Activated naive CD8-positive, alpha-beta T cell treated with anti-CD3 and anti-CD28 coated beads, Interleukin-2, amount 10 ng/mL, durations not matched to agents 7 days and 5 days (primary cell): ENCODE measurements at regions of chr17 and their contacts with region 1.

Region 1: GRCh38 chr17:28335201-28335955 is at the starts of genes IFT20 and TNFAIP1:
- DNase-seq: peak; percentile 92
- ATAC-seq: peak; percentile 97
- H3K4me3 Mint-ChIP-seq: peak within 1 kb of the TSS; percentile 97
- H3K27ac Mint-ChIP-seq: peak within 1 kb of the TSS; percentile 97
- H3K4me1 Mint-ChIP-seq: peaks cover 27% of the 10 kb centered on the region
- H3K27me3 Mint-ChIP-seq: no peaks in the 10 kb centered on the region
- total RNA-seq, gene IFT20: 24.6 to 28.9 TPM
- total RNA-seq, gene TNFAIP1: 18.7 to 20.3 TPM

Region 2: DNA sequence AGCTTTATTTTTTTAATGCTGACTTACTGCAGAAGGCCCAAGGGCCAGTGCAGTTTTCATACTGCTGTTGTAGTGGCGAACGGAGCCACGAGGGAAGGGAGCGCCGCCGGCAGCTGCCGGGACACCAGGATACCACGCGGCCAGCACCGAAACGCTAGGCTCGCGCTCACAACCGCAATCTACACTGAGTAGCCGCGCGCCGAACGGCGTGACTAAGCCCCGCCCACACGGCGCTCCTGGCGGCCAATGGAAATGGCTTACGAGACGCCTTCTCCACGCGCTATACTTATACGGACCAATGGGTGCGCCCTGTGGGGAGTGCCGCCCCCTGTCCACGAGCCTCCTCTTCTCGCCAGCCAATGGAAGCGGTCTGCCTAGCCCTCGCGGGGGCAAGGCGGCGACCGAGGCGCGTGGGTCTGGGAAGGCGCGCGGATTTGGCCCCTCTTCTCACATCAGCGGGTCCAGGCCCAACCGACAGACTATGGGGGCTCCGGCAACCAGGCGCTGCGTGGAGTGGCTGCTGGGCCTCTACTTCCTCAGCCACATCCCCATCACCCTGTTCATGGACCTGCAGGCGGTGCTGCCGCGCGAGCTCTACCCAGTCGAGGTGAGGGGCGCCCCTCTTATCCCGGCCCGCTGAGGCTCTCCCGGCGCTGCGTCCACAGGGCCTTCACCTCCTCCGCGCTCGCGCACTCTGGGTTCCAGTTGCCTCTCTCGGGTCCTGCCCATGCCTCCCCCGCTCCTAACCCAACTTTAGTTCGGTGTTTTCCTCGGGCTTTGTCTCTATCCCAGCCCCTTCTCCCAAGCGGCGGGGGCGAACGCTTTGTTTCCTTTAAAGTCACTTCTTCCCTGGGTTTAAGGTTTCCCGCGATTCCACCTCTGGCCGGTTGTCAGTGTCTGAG is 16.4 kb before region 1 on chr17 and contains the start of gene TMEM97:
- POLR2A ChIA-PET with region 1: interaction called, 24 read pairs
- DNase-seq: peak; percentile 95
- ATAC-seq: peak; percentile 99
- H3K4me3 Mint-ChIP-seq: peak within 1 kb of the TSS; percentile 84
- H3K27ac Mint-ChIP-seq: peak within 1 kb of the TSS; percentile 86
- H3K4me1 Mint-ChIP-seq: peaks cover 32% of the 10 kb centered on the region
- H3K27me3 Mint-ChIP-seq: no peaks in the 10 kb centered on the region
- total RNA-seq, gene TMEM97: 18.8 to 20.9 TPM

Region 3: DNA sequence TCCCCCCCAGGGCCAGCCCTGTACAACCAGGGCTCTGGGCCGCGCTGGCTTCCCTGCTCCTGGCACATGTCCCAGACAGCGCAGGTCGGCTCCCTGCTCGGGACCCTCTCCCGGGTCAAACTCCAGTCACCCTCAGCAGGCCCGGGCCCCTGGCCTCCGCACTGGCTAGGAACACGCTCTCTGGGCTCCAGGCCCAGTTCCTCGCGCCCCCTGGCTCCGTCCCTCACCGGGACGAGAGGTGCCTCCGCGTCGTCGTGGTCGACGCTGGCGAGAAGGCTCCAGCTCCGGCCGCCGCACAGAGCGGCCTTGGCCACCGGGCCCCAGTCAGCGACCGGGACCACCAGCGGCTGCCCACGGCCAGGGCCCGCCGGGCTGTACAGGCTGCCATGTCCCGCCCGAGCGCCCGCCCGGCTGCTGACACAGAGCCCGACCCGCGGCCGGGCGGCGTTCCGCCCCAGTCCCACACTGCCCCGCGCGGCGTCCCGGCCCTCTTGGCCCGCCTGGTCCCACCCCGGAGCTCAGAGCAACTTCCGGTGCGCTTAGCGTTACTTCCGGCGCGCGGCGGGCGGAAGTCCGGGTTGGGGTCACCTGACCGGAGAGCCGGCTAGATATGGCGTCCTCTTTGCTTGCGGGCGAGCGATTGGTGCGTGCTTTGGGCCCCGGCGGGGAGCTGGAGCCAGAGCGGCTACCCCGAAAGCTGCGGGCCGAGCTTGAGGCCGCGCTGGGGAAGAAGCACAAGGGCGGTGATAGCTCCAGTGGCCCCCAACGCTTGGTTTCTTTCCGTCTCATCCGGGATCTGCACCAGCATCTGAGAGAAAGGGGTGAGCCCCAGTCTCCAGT is 21.9 kb after region 1 on chr17 and contains the start of gene POLDIP2:
- POLR2A ChIA-PET with region 1: interaction called, 75 read pairs
- DNase-seq: peak; percentile 97
- ATAC-seq: peak; percentile 99
- H3K4me3 Mint-ChIP-seq: peak within 1 kb of the TSS; percentile 94
- H3K27ac Mint-ChIP-seq: peak within 1 kb of the TSS; percentile 93
- H3K4me1 Mint-ChIP-seq: peaks cover 19% of the 10 kb centered on the region
- H3K27me3 Mint-ChIP-seq: no peaks in the 10 kb centered on the region
- total RNA-seq, gene POLDIP2: 51.5 to 54.5 TPM

Region 4: GRCh38 chr17:28384281-28385036 is 49.1 kb after region 1 on chr17:
- POLR2A ChIA-PET with region 1: interaction called, 12 read pairs
- DNase-seq: peak; percentile 76
- ATAC-seq: peak; percentile 95
- H3K4me3 Mint-ChIP-seq: peak overlapping the region; percentile 96
- H3K27ac Mint-ChIP-seq: peak overlapping the region; percentile 92
- H3K4me1 Mint-ChIP-seq: peaks cover 23% of the 10 kb centered on the region
- H3K27me3 Mint-ChIP-seq: no peaks in the 10 kb centered on the region

Region 5: GRCh38 chr17:28743225-28744103 is 408.1 kb after region 1 on chr17 and contains the start of gene TRAF4:
- POLR2A ChIA-PET with region 1: interaction called, 10 read pairs
- DNase-seq: peak; percentile 88
- ATAC-seq: peak; percentile 86
- H3K4me3 Mint-ChIP-seq: peak within 1 kb of the TSS; percentile 91
- H3K27ac Mint-ChIP-seq: peak within 1 kb of the TSS; percentile 88
- H3K4me1 Mint-ChIP-seq: peaks cover 26% of the 10 kb centered on the region
- H3K27me3 Mint-ChIP-seq: no peaks in the 10 kb centered on the region
- total RNA-seq, gene TRAF4: 48.1 to 55.3 TPM